GM10248 (cell line): ENCODE measurements at regions of chr7 and their contacts with region 1.

Region 1: DNA sequence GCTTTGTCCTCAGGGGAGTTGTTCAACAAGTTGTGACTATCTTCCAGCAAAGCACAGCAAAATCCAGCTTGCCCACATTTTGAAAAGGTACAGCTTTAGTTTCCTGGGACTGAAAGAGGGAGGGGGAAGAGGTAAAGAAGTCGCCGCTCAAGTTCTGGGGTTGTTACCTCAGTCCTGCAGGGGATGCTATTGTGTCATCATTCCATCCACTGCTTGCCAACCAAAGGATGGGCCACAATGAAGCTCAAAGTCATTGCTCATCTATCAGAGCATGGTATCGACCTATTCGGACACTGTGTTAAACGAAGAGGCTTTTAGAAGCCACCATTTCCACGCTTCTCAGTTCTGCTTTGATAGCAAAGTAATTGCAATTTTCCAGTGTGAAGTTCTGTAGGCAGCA is 34.3 kb downstream of the NPY start:
- DNase-seq: peak; percentile 46
- CTCF ChIP-seq: peak; percentile 10

Region 2: DNA sequence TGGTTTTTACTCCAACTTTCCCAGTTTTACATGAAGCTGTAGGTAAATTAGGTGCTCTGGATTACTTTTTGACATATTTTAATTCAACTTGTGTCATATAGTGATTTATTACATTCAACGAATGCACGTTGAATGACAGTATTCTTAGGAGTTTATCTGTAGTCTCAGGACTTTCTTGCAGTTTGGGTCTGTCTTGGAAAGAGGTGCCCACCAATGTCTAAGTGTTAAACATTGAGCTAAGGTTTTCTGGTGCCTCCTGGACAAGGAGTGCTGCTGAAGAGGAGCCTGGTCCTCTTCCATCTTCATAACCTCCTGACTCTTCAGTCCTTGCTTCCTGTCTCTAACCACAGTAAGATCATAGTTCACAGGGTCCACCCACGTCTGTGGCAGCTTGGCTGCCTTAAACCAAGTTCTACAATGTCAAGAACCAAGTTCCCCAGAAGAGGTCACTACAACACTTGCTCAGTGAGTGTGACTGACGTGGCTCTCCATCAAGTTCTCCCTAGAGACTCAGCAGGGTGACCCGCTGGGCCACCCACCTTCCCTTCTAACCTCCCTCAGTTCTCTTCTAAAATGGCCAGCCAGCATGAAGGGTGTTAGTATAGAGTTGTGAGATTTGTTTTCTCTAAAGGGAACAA is 28.2 kb before region 1 on chr7:
- CTCF ChIA-PET with region 1: interaction called, 14 read pairs
- POLR2A ChIA-PET with region 1: no interaction called
- DNase-seq: peak; percentile 81
- CTCF ChIP-seq: peak; percentile 57

Region 3: GRCh38 chr7:24301703-24302102 is 16.6 kb before region 1 on chr7:
- CTCF ChIA-PET with region 1: no interaction called
- POLR2A ChIA-PET with region 1: no interaction called
- DNase-seq: no peak
- CTCF ChIP-seq: no peak

Region 4: DNA sequence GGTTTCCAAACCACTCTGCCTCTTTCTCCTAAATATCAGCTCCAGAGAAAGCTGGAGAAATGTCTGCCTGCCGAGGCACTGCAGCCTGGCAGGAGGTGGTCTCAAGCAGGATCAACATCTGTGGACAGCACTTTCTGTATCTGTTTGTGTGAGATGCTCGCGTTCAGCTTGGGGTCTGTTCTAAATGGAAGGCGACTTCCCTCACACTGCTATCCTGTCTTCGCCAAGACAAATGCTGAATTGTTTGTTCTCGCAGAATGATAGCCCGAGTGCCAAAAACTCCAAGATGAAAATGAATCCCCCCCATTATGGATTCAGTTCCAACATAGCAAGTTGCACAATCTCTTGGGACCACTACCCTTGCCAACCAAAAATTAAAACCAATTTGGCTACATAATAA is 182.7 kb after region 1 on chr7:
- CTCF ChIA-PET with region 1: no interaction called
- POLR2A ChIA-PET with region 1: no interaction called
- DNase-seq: no peak
- CTCF ChIP-seq: no peak